Mucosa of descending colon (tissue), 3 donors: ENCODE measurements at regions of chr7 and their contacts with region 1.

Region 1: DNA sequence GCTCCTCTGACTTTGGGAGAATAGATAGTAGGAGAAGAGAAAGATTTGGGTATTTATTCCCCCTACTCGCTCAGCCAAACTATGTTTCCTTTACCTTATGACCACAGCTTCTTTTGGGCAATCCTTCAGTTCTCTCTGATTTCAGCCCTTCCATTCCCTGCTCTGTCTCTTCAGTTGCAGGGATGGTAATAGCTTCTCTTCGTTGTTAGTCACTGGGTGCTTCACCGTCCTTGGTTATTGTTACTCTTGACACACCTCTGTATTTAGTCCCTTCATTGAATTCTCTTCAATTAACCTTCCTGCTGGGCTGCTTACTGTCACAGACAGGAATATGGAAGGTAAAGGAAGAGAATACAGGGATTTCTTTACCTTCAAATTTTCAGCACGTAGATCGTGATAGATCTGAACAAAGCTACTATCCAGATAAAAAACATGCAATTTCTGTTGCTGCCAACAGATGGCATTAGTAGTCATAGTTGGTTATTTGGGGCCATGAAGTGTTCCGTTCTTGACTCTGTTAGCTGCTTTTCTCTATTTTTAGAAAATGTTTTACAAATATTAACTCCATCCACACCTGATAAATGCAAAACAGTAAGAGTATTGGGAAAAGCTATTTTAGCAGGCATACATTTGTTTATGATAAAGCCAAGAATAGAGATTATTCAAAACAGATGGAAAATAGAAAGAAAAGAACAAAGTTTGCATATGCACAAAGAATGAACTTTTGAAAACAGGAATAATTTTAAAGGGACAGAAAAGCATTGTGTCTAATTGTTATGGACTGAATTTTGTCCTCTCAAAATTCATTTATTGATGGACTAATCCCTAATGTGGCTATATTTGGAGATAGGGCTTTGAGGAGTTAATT is 14.0 kb upstream of the PTTG1IP2 start:
- DNase-seq: peak in 1 of 3 donors; percentile 71
- ATAC-seq: peak; percentile 71
- H3K4me3 ChIP-seq: no peak overlapping the region
- H3K4me1 ChIP-seq: no peaks in the 10 kb centered on the region
- CTCF ChIP-seq: peak; percentile 42

Region 2: DNA sequence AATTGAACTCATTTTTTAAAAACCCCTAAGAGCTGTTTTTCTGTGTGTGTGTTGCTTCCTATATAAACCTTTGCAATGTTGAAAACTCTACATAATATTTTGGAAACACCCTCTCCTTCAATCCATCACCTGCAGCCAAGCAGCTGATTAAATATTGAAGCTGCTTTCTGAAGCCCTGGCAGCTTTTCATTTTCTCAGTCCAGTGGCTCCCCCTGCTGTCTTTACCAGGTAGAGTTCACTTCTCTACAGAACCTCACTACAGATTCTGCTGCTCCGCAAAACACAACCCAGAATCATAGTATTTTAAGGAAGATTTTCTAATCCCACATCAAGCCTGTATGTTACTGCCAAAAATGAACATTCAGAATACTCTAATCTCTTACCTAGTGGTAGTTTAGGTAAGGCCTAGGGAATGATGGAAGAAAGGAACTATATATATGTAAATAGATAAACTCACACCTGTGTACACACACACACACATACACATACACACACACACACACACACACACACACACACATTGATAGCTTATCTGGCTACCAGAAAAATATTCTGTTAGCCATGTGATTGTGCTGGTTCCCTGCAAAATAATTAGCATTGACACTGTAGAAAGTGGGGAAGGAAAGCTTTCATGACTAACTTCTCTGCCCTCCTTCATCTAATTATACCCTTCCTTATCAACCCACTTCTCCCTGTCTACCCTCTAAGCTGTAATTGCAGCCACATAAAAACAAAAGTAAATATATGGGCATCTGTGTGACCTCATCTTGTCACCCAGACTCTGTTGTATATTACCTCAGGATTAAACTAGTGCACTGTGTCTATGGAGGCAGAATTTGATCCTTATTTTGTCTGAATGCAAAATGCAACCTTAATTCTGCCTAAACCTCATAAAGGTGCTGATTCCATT is 579.3 kb after region 1 on chr7:
- intact Hi-C with region 1: loop called in 1 of 2 experiments (anchors 10 kb)
- DNase-seq: peak in 1 of 3 donors; percentile 82
- ATAC-seq: peak; percentile 67
- H3K4me3 ChIP-seq: no peak overlapping the region
- H3K4me1 ChIP-seq: no peaks in the 10 kb centered on the region
- CTCF ChIP-seq: peak; percentile 34